Caco-2 (cell line): ENCODE measurements at regions of chr17 and their contacts with region 1.

Region 1: GRCh38 chr17:42843358-42843934 is 934 bp upstream of the AOC2 start:
- DNase-seq: peak in 1 of 2 experiments; percentile 70
- H3K4me3 ChIP-seq: no peak overlapping the region
- H3K4me3 Mint-ChIP-seq: no peak overlapping the region
- H3K27ac Mint-ChIP-seq: no peak overlapping the region
- H3K4me1 ChIP-seq: no peaks in the 10 kb centered on the region
- H3K4me1 Mint-ChIP-seq: no peaks in the 10 kb centered on the region
- H3K27me3 ChIP-seq: no peaks in the 10 kb centered on the region
- H3K27me3 Mint-ChIP-seq: no peaks in the 10 kb centered on the region
- CTCF ChIP-seq: peak; percentile 96 to 99

Region 2: GRCh38 chr17:42886283-42887176 is 43.1 kb after region 1 on chr17:
- CTCF ChIA-PET with region 1: no interaction called
- POLR2A ChIA-PET with region 1: no interaction called
- intact Hi-C with region 1: loop called (anchors 1 kb)
- DNase-seq: peak in 1 of 2 experiments; percentile 48
- H3K4me3 ChIP-seq: no peak overlapping the region
- H3K4me3 Mint-ChIP-seq: no peak overlapping the region
- H3K27ac Mint-ChIP-seq: no peak overlapping the region
- H3K4me1 ChIP-seq: peaks cover 9% of the 10 kb centered on the region
- H3K4me1 Mint-ChIP-seq: peaks cover 9% of the 10 kb centered on the region
- H3K27me3 ChIP-seq: no peaks in the 10 kb centered on the region
- H3K27me3 Mint-ChIP-seq: no peaks in the 10 kb centered on the region
- CTCF ChIP-seq: no peak

Region 3: DNA sequence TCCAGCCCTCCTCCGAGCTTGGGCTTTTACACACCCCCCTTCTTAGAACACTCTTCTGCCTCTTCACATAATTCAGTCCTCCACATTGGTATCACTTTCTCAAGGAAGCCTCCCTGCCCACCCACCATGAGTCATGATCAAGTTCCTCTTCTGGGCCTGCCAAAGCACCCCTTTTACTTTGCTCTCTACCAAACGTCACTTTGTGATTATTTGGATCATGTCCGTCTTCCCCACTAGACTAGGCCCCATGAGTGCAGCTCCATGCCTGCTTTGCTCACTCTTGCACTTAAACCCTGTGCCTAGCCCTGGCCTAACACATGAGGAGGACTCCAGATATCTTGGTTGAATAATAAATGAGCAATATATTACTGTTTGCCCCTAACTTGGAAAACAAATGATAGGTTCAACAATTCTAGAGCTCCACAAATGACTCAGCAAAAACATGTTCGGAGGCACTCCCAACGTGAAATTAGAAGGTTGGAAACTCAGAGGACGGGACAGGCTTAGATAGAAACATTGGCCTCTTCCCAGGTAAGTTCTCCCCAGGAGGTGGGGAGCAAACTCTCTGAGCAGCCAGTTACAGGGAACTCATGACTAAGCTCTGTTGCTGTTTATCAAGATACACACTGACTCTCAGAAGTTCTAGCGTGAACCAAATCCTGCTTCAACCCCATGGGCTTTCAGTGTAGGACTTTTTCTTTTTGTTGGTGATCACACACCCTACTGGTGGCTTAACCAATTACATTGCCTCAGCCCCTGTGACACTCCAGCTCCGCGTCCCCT is 85.5 kb after region 1 on chr17:
- CTCF ChIA-PET with region 1: interaction called, 25 read pairs
- POLR2A ChIA-PET with region 1: interaction called, 5 read pairs
- intact Hi-C with region 1: loop called (anchors 1 kb)
- DNase-seq: peak; percentile 62 to 73
- H3K4me3 ChIP-seq: no peak overlapping the region
- H3K4me3 Mint-ChIP-seq: no peak overlapping the region
- H3K27ac Mint-ChIP-seq: peak overlapping the region; percentile 8
- H3K4me1 ChIP-seq: peaks cover 6% of the 10 kb centered on the region; the same call in 1 of the 2 replicates
- H3K4me1 Mint-ChIP-seq: no peaks in the 10 kb centered on the region
- H3K27me3 ChIP-seq: no peaks in the 10 kb centered on the region
- H3K27me3 Mint-ChIP-seq: no peaks in the 10 kb centered on the region
- CTCF ChIP-seq: peak; percentile 76

Region 4: DNA sequence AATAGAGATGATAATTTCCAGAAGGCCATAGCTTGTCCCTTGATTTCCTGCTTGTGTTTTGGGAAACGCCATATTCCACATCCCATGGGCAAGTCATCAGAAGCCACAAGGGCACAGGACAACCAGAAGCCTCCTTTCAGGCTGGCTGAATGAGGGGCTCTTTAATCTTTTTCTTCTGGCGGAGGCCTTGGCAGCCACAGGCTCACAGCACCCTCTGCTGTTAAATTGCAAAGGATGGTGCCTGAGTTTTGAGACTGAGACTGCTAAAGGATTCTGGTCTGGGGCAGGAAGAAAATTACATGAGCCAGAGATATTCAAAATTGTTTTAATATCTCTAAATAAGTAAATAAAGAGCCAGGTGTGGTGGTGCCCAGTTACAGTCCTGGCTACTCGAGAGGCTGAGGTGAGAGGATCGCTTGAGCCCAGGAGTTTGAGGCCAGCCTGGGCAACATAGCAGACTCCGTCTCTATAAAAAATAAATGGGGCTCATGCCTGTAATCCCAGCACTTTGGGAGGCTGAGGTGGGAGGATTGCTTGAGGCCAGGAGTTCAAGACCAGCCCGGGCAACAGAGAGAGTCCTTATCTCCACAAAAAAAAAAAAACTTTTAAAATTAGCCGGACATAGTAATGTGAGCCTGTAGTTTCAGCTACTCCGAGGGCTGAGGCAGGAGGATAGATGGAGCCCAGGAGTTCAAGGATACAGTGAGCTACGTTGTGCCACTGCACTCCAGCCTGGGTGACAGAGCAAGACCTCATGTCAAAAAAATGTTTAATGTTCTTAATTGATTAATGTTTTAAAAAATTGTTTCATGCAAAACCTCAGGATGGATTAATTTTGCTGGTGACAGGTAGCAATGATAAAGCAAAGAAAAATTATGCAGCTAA is 94.5 kb after region 1 on chr17:
- CTCF ChIA-PET with region 1: interaction called, 7 read pairs
- POLR2A ChIA-PET with region 1: no interaction called
- intact Hi-C with region 1: loop called (anchors 1 kb)
- DNase-seq: peak; percentile 65 to 72
- H3K4me3 ChIP-seq: no peak overlapping the region
- H3K4me3 Mint-ChIP-seq: no peak overlapping the region
- H3K27ac Mint-ChIP-seq: no peak overlapping the region
- H3K4me1 ChIP-seq: no peaks in the 10 kb centered on the region
- H3K4me1 Mint-ChIP-seq: no peaks in the 10 kb centered on the region
- H3K27me3 ChIP-seq: no peaks in the 10 kb centered on the region
- H3K27me3 Mint-ChIP-seq: peaks cover 5% of the 10 kb centered on the region
- CTCF ChIP-seq: peak; percentile 75 to 81